Endothelial cell of umbilical vein (primary cell): ENCODE measurements at regions of chr6 and their contacts with region 1.

Region 1: DNA sequence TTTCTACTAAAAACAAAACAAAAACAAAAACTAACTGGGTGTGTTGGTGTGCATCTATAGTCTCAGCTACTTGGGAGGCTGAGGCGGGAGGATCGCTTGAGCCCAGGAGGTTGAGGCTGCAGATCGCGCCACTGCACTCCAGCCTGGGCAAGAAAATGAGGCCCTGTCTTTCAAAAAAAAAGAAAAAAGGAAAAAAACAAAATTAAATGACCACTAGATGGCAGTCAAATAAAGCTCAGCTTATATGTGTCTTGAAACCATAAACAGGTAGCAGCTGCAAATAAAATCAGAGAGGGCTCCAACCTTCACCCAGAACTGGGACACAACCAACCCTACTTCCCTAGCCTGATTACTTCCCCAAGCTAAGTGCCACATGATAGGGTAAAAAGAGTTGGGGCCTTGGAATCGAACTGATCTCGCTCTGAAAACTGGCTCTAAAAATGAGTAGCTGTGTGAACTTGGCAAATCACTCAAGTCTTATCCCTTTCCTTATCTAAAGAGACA is 67.1 kb upstream of the ADGRF4 start:
- DNase-seq: peak; percentile 76
- H3K4me3 ChIP-seq: no peak overlapping the region
- H3K27ac ChIP-seq: no peak overlapping the region
- H3K4me1 ChIP-seq: no peaks in the 10 kb centered on the region
- H3K27me3 ChIP-seq: no peaks in the 10 kb centered on the region
- CTCF ChIP-seq: peak; percentile 37 to 43
- POLR2A ChIP-seq: no peak

Region 2: DNA sequence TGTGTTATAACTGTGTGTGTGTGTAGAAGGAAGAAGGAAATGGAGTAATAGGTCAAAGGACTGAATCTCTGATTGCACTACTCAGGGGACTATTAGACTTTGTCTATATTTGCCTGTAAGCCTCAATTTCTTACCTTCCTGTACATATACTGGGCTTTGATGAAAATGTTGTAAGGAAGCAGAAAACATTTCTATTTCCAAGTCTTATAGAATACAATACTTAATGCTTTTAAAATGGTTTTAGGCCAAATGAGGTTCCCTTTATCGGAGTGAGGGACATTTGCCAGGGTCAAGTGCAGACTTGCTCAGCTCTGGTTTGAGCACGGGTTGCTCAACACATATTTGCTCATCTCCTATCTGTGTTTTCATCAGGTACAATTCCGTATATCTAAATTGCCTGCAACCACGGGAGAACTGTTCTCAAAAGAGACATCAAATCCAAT is 809.8 kb before region 1 on chr6:
- CTCF ChIA-PET with region 1: no interaction called
- POLR2A ChIA-PET with region 1: no interaction called
- dilution Hi-C with region 1: no loop called
- intact Hi-C with region 1: no loop called
- DNase-seq: no peak
- H3K4me3 ChIP-seq: no peak overlapping the region
- H3K27ac ChIP-seq: no peak overlapping the region
- H3K4me1 ChIP-seq: no peaks in the 10 kb centered on the region
- H3K27me3 ChIP-seq: peaks cover 5 to 10% of the 10 kb centered on the region in 2 experiments
- CTCF ChIP-seq: no peak
- POLR2A ChIP-seq: no peak

Region 3: GRCh38 chr6:47477497-47478232 is 153.7 kb before region 1 on chr6 and contains the start of gene CD2AP:
- CTCF ChIA-PET with region 1: interaction called, 15 read pairs
- POLR2A ChIA-PET with region 1: interaction called, 3 read pairs
- dilution Hi-C with region 1: no loop called
- intact Hi-C with region 1: no loop called
- DNase-seq: peak; percentile 82
- H3K4me3 ChIP-seq: peak within 1 kb of the TSS; percentile 62 to 92 (median 85)
- H3K27ac ChIP-seq: peak within 1 kb of the TSS; percentile 71
- H3K4me1 ChIP-seq: peaks cover 28% of the 10 kb centered on the region
- H3K27me3 ChIP-seq: no peaks in the 10 kb centered on the region
- CTCF ChIP-seq: peak in 1 of 2 donors; percentile 7
- POLR2A ChIP-seq: peak; percentile 68
- total RNA-seq, gene CD2AP: 37.3 and 39.8 TPM in 2 replicates

Region 4: DNA sequence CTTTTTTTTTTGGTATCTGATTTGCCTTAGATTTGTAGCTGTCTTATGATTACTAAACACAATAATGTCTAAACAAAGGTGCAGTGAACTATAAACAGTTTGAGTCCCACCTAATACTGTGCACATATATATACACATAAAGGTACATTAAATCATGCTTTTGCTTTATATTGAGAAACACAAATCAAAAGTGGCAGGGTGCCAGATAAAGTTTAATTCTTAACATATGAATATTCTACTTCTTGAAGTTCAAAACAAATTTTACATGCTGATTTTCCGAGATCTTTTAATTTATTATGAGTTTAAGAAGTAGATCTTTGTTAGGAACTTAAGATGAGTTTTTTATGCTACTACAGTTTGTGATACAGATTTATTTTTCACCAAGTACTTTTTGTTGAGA is 25.8 kb before region 1 on chr6:
- CTCF ChIA-PET with region 1: interaction called, 13 read pairs
- POLR2A ChIA-PET with region 1: no interaction called
- dilution Hi-C with region 1: no loop called
- intact Hi-C with region 1: no loop called
- DNase-seq: no peak
- H3K4me3 ChIP-seq: no peak overlapping the region
- H3K27ac ChIP-seq: no peak overlapping the region
- H3K4me1 ChIP-seq: no peaks in the 10 kb centered on the region
- H3K27me3 ChIP-seq: no peaks in the 10 kb centered on the region
- CTCF ChIP-seq: no peak
- POLR2A ChIP-seq: no peak

Region 5: DNA sequence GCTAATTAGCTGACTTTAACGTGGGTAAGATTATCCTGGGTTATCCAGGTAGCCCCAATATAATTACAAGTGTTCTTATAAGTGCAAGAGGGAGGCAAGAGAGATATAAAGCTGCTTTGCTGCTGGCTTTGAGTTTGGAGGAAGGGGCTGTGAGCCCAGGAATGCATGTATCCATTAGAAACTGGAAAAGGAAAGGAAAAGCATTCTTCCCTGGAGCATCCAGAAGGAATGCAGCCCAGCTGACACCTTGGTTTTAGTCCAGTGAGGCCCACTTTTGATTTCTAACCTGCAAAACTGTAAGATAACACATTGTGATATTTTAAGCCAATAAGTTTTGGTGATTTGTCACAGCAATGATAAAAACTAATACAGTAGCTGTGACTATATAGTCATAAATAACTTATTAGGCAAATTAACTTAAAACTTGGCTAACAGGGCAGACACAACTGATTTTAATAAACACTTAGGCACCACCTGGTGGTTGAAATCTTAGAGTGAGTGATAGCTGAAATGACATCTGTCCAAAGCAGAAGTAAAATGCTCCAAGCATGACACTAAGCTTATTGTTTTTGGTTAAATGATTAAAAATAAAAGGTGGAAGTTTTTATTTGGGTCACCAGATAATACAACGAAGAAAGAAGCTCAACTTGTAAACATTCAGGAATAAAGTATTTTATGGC is 102.7 kb after region 1 on chr6:
- CTCF ChIA-PET with region 1: interaction called, 82 read pairs
- POLR2A ChIA-PET with region 1: no interaction called
- dilution Hi-C with region 1: no loop called
- intact Hi-C with region 1: loop called (anchors 1 kb)
- DNase-seq: peak; percentile 49
- H3K4me3 ChIP-seq: no peak overlapping the region
- H3K27ac ChIP-seq: no peak overlapping the region
- H3K4me1 ChIP-seq: no peaks in the 10 kb centered on the region
- H3K27me3 ChIP-seq: no peaks in the 10 kb centered on the region
- CTCF ChIP-seq: peak in 1 of 2 donors; percentile 18
- POLR2A ChIP-seq: no peak

Region 6: GRCh38 chr6:47787620-47788497 is 156.5 kb after region 1 on chr6:
- CTCF ChIA-PET with region 1: interaction called, 11 read pairs
- POLR2A ChIA-PET with region 1: no interaction called
- dilution Hi-C with region 1: no loop called
- intact Hi-C with region 1: no loop called
- DNase-seq: peak; percentile 52
- H3K4me3 ChIP-seq: no peak overlapping the region
- H3K27ac ChIP-seq: no peak overlapping the region
- H3K4me1 ChIP-seq: no peaks in the 10 kb centered on the region
- H3K27me3 ChIP-seq: peaks cover 10 to 14% of the 10 kb centered on the region in 2 experiments
- CTCF ChIP-seq: peak; percentile 76 to 86
- POLR2A ChIP-seq: no peak

Region 7: GRCh38 chr6:47853766-47854165 is 222.4 kb after region 1 on chr6:
- CTCF ChIA-PET with region 1: no interaction called
- POLR2A ChIA-PET with region 1: no interaction called
- dilution Hi-C with region 1: no loop called
- intact Hi-C with region 1: no loop called
- DNase-seq: no peak
- H3K4me3 ChIP-seq: no peak overlapping the region
- H3K27ac ChIP-seq: no peak overlapping the region
- H3K4me1 ChIP-seq: no peaks in the 10 kb centered on the region
- H3K27me3 ChIP-seq: no peaks in the 10 kb centered on the region
- CTCF ChIP-seq: no peak
- POLR2A ChIP-seq: no peak

Region 8: DNA sequence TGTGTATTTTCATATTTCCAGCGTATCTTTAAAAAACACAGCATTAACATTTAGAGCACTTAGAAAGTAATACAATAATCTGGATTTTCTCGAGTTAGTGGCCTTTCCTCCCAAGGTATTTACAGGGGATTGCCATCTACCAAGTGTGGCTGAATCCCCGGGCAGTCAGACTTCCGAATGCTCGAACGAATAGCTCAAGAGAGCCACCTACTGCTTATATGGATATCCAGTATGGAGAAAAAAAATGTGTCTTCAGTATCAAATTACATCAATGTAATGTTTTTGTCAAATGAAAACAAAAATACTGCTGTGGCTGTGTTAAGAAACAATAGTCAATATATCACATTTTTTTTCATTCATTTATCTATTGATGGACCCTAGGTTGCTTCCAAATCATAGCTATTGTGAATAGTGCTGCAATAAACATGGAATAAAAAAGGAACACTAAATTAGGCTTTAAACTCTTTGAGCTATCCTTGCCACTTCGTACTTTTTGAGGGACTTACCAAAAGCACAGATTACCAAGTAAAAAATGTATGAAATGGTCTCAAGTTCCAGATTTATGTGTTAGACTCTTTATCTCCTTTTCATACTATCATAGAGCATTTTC is 1134.1 kb after region 1 on chr6:
- CTCF ChIA-PET with region 1: interaction called, 21 read pairs
- POLR2A ChIA-PET with region 1: no interaction called
- dilution Hi-C with region 1: no loop called
- intact Hi-C with region 1: loop called (anchors 2 kb)
- DNase-seq: peak; percentile 74
- H3K4me3 ChIP-seq: no peak overlapping the region
- H3K27ac ChIP-seq: no peak overlapping the region
- H3K4me1 ChIP-seq: peaks cover 3% of the 10 kb centered on the region
- H3K27me3 ChIP-seq: no peaks in the 10 kb centered on the region
- CTCF ChIP-seq: peak; percentile 49 to 50
- POLR2A ChIP-seq: no peak